CD8-positive, alpha-beta T cell (primary cell): ENCODE measurements at regions of chr6 and their contacts with region 1.

Region 1: DNA sequence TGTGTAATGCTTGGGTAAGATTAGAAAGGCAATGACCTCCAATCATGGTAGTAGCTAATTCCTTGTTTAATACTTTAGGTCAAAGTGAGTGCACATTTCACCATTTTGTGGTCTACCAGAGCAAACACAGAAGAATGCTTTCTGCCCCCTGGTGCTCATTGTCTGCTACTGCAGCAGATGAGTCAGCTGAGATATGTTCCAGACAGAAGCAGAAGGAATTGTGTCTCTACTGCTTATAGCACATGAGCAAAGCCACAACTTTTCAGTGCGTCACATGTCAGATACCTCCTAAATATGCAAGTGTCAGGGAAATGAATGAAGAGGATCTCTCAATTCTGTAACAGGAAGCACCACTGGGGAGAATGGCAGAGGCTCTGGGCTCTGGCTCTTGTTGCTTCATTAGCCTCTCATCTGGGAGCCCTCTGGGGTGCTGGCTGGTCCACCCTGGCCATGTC is 308.9 kb downstream of the ALDH8A1 start:
- DNase-seq: peak; percentile 53 to 86 (median 77)
- ATAC-seq: peak; percentile 97
- H3K4me3 ChIP-seq: no peak overlapping the region
- H3K4me3 Mint-ChIP-seq: no peak overlapping the region
- H3K27ac ChIP-seq: no peak overlapping the region
- H3K27ac Mint-ChIP-seq: no peak overlapping the region
- H3K4me1 ChIP-seq: no peaks in the 10 kb centered on the region
- H3K4me1 Mint-ChIP-seq: peaks cover 10% of the 10 kb centered on the region
- H3K27me3 ChIP-seq: no peaks in the 10 kb centered on the region
- H3K27me3 Mint-ChIP-seq: no peaks in the 10 kb centered on the region
- CTCF ChIP-seq: peak; percentile 89

Region 2: GRCh38 chr6:133952815-133953633 is 688.0 kb before region 1 on chr6 and contains the start of gene TBPL1:
- CTCF ChIA-PET with region 1: interaction called, 3 read pairs
- POLR2A ChIA-PET with region 1: no interaction called
- intact Hi-C with region 1: loop called in 1 of 2 experiments (anchors 2 kb)
- DNase-seq: peak; percentile 85 to 97 (median 92)
- ATAC-seq: peak; percentile 85
- H3K4me3 ChIP-seq: peak within 1 kb of the TSS; percentile 73 to 82
- H3K4me3 Mint-ChIP-seq: peak within 1 kb of the TSS; percentile 94
- H3K27ac ChIP-seq: peak within 1 kb of the TSS; percentile 55 to 90
- H3K27ac Mint-ChIP-seq: peak within 1 kb of the TSS; percentile 96
- H3K4me1 ChIP-seq: peaks cover 20% of the 10 kb centered on the region
- H3K4me1 Mint-ChIP-seq: peaks cover 50% of the 10 kb centered on the region
- H3K27me3 ChIP-seq: no peaks in the 10 kb centered on the region
- H3K27me3 Mint-ChIP-seq: no peaks in the 10 kb centered on the region
- CTCF ChIP-seq: no peak
- total RNA-seq, gene TBPL1: 47.8 to 48.7 TPM

Region 3: DNA sequence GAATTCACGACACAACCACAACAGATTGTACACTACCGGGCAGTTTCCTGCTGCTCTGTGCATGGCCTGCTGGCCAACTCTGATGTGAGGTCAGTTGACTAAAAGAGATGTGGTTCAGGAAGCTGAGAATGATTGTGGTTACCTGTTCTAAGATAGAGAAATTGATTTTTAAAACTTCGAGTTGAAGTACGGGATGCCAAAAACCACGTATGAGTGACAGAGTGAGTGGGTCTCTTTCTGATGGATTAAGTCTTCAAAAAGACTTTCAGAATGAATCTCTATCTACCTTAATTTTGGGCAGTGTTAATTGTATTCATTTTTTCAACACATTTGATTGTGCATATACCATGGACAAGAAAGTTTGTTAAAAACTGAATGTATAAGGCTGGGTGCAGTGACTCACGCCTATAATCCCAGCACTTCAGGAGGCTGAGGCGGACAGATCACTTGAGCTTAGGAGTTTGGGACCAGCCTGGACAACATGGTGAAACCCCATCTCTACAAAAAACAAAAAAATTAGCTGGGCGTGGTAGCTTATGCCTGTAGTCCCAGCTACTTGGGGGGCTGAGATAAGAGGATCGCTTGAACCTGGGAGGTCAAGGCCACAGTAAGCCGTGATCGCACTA is 444.3 kb before region 1 on chr6:
- CTCF ChIA-PET with region 1: interaction called, 20 read pairs
- POLR2A ChIA-PET with region 1: no interaction called
- intact Hi-C with region 1: no loop called
- DNase-seq: no peak
- ATAC-seq: no peak
- H3K4me3 ChIP-seq: no peak overlapping the region
- H3K4me3 Mint-ChIP-seq: no peak overlapping the region
- H3K27ac ChIP-seq: no peak overlapping the region
- H3K27ac Mint-ChIP-seq: no peak overlapping the region
- H3K4me1 ChIP-seq: no peaks in the 10 kb centered on the region
- H3K4me1 Mint-ChIP-seq: peaks cover 12% of the 10 kb centered on the region
- H3K27me3 ChIP-seq: no peaks in the 10 kb centered on the region
- H3K27me3 Mint-ChIP-seq: no peaks in the 10 kb centered on the region
- CTCF ChIP-seq: no peak

Region 4: DNA sequence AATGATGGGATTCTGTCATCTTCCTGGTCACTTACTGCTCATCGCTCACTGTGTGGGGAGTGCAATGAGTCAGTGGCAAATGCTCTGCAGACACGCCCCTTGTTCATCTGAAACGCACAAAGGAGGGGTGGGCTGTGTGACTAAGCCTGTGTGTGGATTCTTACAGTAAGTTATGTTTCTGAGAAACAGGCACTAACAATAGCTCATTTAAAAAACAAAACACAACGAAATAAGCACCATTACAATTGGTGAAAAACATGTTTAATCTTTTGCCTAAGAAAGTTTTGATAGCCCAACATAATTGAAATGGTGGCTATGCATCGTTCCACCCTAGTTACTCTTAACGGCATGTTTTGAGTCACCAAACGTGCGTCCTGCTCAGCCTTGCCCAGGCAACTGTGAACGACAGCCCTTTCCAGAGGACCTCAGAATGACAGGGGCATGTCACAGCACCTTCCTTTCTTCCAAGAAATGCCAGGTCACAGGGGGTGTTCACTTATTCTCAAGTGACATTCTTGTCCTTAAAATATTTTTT is 204.7 kb before region 1 on chr6:
- CTCF ChIA-PET with region 1: interaction called, 3 read pairs
- POLR2A ChIA-PET with region 1: no interaction called
- intact Hi-C with region 1: loop called (anchors 2 to 5 kb)
- DNase-seq: peak in 7 of 9 experiments; percentile 13 to 56 (median 50)
- ATAC-seq: peak; percentile 78
- H3K4me3 ChIP-seq: peak overlapping the region in 1 of 2 experiments; percentile 4
- H3K4me3 Mint-ChIP-seq: peak overlapping the region; percentile 63
- H3K27ac ChIP-seq: no peak overlapping the region
- H3K27ac Mint-ChIP-seq: peak overlapping the region; percentile 38
- H3K4me1 ChIP-seq: peaks cover 7% of the 10 kb centered on the region
- H3K4me1 Mint-ChIP-seq: peaks cover 22% of the 10 kb centered on the region
- H3K27me3 ChIP-seq: no peaks in the 10 kb centered on the region
- H3K27me3 Mint-ChIP-seq: no peaks in the 10 kb centered on the region
- CTCF ChIP-seq: no peak

Region 5: DNA sequence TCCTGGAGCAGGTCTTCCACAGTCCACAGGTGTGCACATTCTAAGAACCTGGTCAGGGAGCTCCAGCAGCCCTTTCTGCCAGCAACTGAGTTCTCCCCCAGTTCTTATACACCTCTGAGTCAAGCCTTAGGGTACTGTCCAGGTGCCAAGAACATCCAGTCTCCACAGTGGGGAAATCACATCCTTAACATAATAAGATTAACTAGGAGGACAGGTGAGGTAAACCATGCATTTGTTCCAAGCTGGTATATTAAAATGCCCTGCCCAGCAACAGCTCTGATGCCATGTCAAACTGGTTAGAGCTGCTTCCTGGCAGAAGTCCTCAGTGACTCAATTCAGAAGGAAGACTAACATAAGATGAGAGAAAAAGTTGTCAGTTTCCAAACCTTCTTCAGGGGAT is 19.1 kb before region 1 on chr6:
- CTCF ChIA-PET with region 1: interaction called, 20 read pairs
- POLR2A ChIA-PET with region 1: no interaction called
- intact Hi-C with region 1: no loop called
- DNase-seq: no peak
- ATAC-seq: no peak
- H3K4me3 ChIP-seq: no peak overlapping the region
- H3K4me3 Mint-ChIP-seq: no peak overlapping the region
- H3K27ac ChIP-seq: no peak overlapping the region
- H3K27ac Mint-ChIP-seq: no peak overlapping the region
- H3K4me1 ChIP-seq: no peaks in the 10 kb centered on the region
- H3K4me1 Mint-ChIP-seq: no peaks in the 10 kb centered on the region
- H3K27me3 ChIP-seq: no peaks in the 10 kb centered on the region
- H3K27me3 Mint-ChIP-seq: no peaks in the 10 kb centered on the region
- CTCF ChIP-seq: no peak

Region 6: DNA sequence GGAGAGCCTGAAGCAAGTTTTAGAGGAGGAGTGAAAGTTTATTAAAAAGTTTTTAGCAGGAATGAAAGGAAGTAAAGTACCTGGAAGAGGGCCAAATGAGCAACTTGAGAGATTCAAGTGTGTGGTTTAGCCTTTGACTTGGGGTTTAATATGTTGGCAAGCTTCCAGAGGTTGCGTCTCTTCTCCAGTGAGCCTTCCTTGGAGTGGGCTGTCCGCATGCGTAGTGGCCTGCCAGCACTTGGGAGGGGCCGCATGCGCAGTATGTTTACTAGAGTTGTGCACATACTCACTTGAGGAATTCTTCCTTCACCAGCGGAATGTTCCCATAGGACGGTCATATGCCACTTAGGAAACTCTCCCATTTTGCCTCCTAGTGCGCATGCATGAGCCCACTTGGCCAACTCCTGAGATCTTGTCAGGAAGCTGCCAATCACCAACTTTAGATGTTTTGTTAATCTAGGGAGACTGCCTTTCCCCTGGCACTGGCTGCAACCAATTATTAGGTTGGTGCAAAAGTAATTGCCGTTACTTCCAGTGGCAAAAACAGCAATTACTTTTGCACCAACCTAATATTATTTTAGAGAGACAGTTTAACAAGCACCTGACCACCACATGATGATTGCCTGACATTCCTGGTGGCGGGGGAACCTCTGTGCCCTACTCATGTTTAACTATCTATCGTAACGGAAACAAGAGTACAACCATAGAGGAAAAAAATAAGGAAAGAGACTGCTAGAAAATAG is 73.8 kb after region 1 on chr6:
- CTCF ChIA-PET with region 1: no interaction called
- POLR2A ChIA-PET with region 1: no interaction called
- intact Hi-C with region 1: no loop called
- DNase-seq: peak in 1 of 9 experiments; percentile 5
- ATAC-seq: no peak
- H3K4me3 ChIP-seq: no peak overlapping the region
- H3K4me3 Mint-ChIP-seq: no peak overlapping the region
- H3K27ac ChIP-seq: no peak overlapping the region
- H3K27ac Mint-ChIP-seq: no peak overlapping the region
- H3K4me1 ChIP-seq: no peaks in the 10 kb centered on the region
- H3K4me1 Mint-ChIP-seq: peaks cover 6% of the 10 kb centered on the region
- H3K27me3 ChIP-seq: no peaks in the 10 kb centered on the region
- H3K27me3 Mint-ChIP-seq: peaks cover 6% of the 10 kb centered on the region
- CTCF ChIP-seq: no peak

Region 7: DNA sequence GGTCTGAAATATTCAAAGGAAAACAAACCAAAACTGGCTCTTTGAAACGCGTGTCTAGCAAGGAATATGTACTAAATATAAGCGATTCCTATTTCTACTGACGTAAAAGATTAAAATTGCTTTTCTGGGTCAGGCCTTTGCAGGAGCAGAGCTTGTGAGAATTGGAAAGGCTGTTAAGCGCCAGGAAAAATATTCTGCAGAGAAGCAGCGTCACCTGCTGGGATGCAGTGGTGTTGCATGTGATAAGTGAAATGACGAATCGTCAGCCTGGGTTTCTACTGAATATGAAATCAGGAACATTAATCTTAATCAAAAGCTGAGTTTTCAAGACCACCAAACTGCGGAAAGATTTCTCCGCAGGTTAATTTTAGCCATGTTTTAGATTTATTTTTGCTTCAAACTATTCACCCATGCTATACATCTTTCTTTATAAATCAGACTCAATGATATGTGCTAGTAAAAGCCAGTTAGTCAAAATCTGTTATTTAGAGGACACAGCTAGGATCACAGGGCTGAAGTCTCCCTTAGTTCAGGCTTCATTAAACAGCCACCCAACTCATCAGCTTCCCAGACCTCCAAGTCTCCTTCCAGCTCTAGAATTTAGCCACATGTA is 241.5 kb after region 1 on chr6:
- CTCF ChIA-PET with region 1: interaction called, 4 read pairs
- POLR2A ChIA-PET with region 1: no interaction called
- intact Hi-C with region 1: loop called (anchors 2 to 5 kb)
- DNase-seq: peak; percentile 5 to 70 (median 32)
- ATAC-seq: peak; percentile 48
- H3K4me3 ChIP-seq: no peak overlapping the region
- H3K4me3 Mint-ChIP-seq: no peak overlapping the region
- H3K27ac ChIP-seq: no peak overlapping the region
- H3K27ac Mint-ChIP-seq: no peak overlapping the region
- H3K4me1 ChIP-seq: no peaks in the 10 kb centered on the region
- H3K4me1 Mint-ChIP-seq: no peaks in the 10 kb centered on the region
- H3K27me3 ChIP-seq: no peaks in the 10 kb centered on the region
- H3K27me3 Mint-ChIP-seq: peaks cover 8% of the 10 kb centered on the region
- CTCF ChIP-seq: peak; percentile 70